PC-9 (cell line): ENCODE measurements at regions of chr4 and their contacts with region 1.

Region 1: DNA sequence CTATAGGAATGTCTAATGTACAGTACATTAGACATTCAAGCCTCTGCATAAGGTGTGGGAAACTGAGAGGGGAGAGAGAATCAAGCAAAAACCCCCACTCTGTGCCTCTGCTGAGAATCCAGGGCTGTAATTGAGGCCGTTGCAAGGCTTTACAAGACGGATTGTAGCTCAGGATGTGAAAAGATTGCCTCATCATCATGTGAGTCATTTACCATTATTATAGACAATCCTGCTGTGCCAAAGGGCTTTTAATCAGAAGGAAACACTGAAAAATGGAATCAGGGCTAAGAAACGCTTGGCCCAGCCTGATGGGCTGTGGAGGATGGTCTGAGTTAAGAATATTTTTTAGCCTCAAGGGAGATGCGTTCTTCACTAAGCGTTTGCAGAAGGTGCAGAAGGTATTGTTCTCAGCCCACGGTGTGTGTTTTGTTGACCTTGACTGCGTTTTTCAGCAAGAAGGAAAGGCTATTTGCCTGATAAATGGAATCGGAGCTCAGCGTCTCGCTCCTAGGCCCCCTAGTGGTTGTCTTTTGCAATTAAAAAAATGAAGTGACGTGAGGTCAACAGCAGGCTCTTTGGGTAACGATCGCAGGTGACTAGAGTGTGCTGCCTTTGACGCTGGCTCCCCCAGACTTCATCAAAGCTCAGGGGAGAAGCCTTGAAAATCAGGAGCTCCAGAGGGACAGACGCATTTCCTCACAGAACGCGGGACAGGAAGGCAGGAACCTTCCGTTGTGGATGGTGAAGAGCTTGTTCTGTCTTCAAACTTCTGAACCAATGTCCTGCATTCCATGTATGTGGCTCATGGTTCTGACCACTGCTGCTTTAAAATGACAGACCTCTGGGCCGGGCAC is 18.1 kb upstream of the CHRNA9 start:
- DNase-seq: peak; percentile 67 to 88
- H3K4me3 ChIP-seq: peak overlapping the region; percentile 46
- H3K27ac ChIP-seq: peak overlapping the region; percentile 99
- H3K4me1 ChIP-seq: peaks cover 73% of the 10 kb centered on the region
- H3K27me3 ChIP-seq: no peaks in the 10 kb centered on the region
- CTCF ChIP-seq: peak; percentile 94

Region 2: GRCh38 chr4:39947423-39947822 is 369.6 kb before region 1 on chr4:
- CTCF ChIA-PET with region 1: no interaction called
- POLR2A ChIA-PET with region 1: interaction called, 14 read pairs
- intact Hi-C with region 1: no loop called
- DNase-seq: no peak
- H3K4me3 ChIP-seq: no peak overlapping the region
- H3K27ac ChIP-seq: no peak overlapping the region
- H3K4me1 ChIP-seq: no peaks in the 10 kb centered on the region
- H3K27me3 ChIP-seq: no peaks in the 10 kb centered on the region
- CTCF ChIP-seq: no peak

Region 3: GRCh38 chr4:40193016-40193571 is 123.9 kb before region 1 on chr4:
- CTCF ChIA-PET with region 1: no interaction called
- POLR2A ChIA-PET with region 1: no interaction called
- intact Hi-C with region 1: no loop called
- DNase-seq: no peak
- H3K4me3 ChIP-seq: no peak overlapping the region
- H3K27ac ChIP-seq: no peak overlapping the region
- H3K4me1 ChIP-seq: peaks cover 17% of the 10 kb centered on the region
- H3K27me3 ChIP-seq: no peaks in the 10 kb centered on the region
- CTCF ChIP-seq: no peak

Region 4: GRCh38 chr4:40275065-40275730 is 41.8 kb before region 1 on chr4:
- CTCF ChIA-PET with region 1: no interaction called
- POLR2A ChIA-PET with region 1: no interaction called
- intact Hi-C with region 1: no loop called
- DNase-seq: no peak
- H3K4me3 ChIP-seq: no peak overlapping the region
- H3K27ac ChIP-seq: no peak overlapping the region
- H3K4me1 ChIP-seq: no peaks in the 10 kb centered on the region
- H3K27me3 ChIP-seq: no peaks in the 10 kb centered on the region
- CTCF ChIP-seq: no peak

Region 5: GRCh38 chr4:40333921-40334352 is 16.9 kb after region 1 on chr4:
- CTCF ChIA-PET with region 1: interaction called, 14 read pairs
- POLR2A ChIA-PET with region 1: interaction called, 3 read pairs
- intact Hi-C with region 1: no loop called
- DNase-seq: peak; percentile 67 to 93
- H3K4me3 ChIP-seq: peak overlapping the region; percentile 5; the same call in 1 of the 2 replicates
- H3K27ac ChIP-seq: peak overlapping the region; percentile 93
- H3K4me1 ChIP-seq: peaks cover 41% of the 10 kb centered on the region
- H3K27me3 ChIP-seq: no peaks in the 10 kb centered on the region
- CTCF ChIP-seq: no peak

Region 6: GRCh38 chr4:40363382-40363920 is 46.4 kb after region 1 on chr4:
- CTCF ChIA-PET with region 1: no interaction called
- POLR2A ChIA-PET with region 1: no interaction called
- intact Hi-C with region 1: loop called (anchors 1 kb)
- DNase-seq: peak; percentile 71 to 97
- H3K4me3 ChIP-seq: no peak overlapping the region; the same call in 1 of the 2 replicates
- H3K27ac ChIP-seq: peak overlapping the region; percentile 80
- H3K4me1 ChIP-seq: peaks cover 47% of the 10 kb centered on the region
- H3K27me3 ChIP-seq: no peaks in the 10 kb centered on the region
- CTCF ChIP-seq: no peak

Region 7: DNA sequence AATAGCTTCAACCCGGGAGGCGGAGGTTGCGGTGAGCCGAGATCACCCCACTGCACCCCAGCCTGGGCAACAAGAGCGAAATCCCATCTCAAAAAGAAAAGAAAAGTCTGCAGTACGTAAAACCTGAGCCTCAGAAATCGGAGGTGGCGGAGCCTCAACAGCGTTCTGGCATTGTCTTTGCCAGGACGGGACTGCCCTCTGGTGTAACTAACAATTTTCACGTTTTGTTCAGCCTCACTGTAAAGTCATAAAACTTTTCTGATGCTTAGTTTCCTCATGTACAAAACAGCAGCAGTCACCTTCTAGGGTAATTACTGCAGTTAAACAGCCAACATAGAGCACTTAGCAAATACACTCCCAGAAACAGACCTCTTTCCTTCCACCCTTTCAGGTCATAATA is 191.0 kb after region 1 on chr4:
- CTCF ChIA-PET with region 1: no interaction called
- POLR2A ChIA-PET with region 1: no interaction called
- intact Hi-C with region 1: loop called (anchors 5 kb)
- DNase-seq: no peak
- H3K4me3 ChIP-seq: no peak overlapping the region
- H3K27ac ChIP-seq: no peak overlapping the region
- H3K4me1 ChIP-seq: peaks cover 32% of the 10 kb centered on the region
- H3K27me3 ChIP-seq: no peaks in the 10 kb centered on the region
- CTCF ChIP-seq: no peak

Region 8: GRCh38 chr4:40629401-40630334 is 312.7 kb after region 1 on chr4 and contains the start of gene RBM47:
- CTCF ChIA-PET with region 1: no interaction called
- POLR2A ChIA-PET with region 1: no interaction called
- intact Hi-C with region 1: loop called (anchors 5 kb)
- DNase-seq: peak; percentile 89 to 94
- H3K4me3 ChIP-seq: peak within 1 kb of the TSS; percentile 96
- H3K27ac ChIP-seq: peak within 1 kb of the TSS; percentile 99
- H3K4me1 ChIP-seq: peaks cover 44% of the 10 kb centered on the region
- H3K27me3 ChIP-seq: no peaks in the 10 kb centered on the region
- CTCF ChIP-seq: no peak; the same call in 1 of the 2 replicates
- total RNA-seq, gene RBM47: 78.0 and 79.0 TPM in 2 replicates